HEK293 (cell line): ENCODE measurements at regions of chr2 and their contacts with region 1.

Region 1: DNA sequence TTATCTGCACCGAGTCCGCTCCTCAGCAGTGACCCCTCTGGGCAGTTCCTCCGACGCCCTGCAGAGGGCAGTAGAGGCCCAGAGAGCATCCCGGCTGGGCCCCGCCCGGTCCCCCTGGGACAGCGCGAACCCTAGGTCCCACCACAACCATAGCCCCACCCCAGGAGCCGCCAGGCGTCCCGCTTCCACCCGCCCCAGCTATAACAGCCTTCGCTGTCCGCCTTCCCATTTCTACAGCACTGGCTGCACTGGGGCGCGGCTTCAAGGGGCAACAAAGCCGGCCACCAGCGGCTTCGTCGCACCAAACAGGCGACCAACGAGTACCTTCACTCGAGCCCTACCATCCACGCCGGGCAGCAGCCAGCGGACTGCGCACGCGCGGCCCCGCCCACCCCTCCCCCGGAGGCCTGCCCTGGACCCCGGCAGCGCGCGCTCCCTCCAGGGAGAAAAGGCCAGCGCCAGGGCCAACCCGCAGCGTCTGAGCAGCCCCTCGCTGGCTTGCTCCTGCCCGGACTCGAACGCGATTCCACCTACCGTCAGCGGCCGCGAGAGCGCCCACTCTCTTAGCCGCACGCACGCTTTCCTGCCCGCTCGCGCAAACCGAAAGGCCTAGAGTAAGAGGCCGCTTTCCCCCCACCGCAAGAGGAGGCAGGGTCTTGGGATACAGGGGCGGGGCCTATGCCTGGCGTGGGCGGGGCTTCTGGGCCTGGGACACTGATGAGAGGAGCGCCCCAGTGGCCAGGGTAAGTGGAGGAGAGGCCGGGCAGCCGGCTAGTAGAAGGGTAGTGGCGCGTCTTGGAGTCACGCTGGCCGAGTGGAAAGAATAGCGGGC is at the start of gene NHEJ1:
- H3K4me3 ChIP-seq: peak within 1 kb of the TSS; percentile 83
- H3K27ac ChIP-seq: peak within 1 kb of the TSS; percentile 97
- H3K4me1 ChIP-seq: peaks cover 5% of the 10 kb centered on the region; the same call in 1 of the 2 replicates
- CTCF ChIP-seq: peak; percentile 96

Region 2: DNA sequence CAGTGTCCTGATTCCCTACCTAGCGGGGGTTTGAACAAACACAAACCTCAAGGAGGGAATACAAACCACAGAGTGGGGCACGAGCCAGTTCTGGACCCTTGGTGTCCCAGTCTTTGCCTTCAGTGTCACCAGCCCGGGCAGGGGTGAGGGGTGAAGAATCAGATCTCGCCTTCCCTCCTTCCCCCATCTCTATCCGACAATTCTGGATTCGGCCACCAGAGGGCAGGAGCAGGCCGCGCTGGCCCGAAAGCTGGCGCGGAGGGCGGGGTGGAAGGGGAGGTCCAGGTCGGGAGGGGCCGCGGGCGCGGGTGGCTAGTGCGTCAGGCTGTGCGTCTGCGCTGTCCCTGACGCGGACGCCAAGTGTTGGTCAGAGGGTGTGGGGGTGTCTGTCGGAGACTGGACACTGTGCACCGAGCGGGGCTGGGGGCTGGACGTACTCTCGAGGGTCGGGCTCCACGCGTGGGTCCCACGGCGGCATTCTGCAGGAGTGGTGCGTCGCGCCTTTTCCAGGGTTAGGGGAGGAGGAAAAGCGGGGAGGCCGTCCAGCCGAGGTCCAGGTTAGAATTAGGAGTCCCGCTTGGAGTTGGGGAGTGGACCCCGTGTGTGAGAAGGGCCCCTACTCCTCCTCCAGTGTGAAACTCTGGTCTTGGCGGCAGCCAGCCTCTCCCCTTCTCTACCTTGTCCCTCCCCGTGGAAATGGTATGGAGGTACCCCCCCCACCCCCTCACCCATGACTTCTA is 164.3 kb before region 1 on chr2:
- CTCF ChIA-PET with region 1: interaction called, 31 read pairs
- POLR2A ChIA-PET with region 1: no interaction called
- H3K4me3 ChIP-seq: peak overlapping the region; percentile 27
- H3K27ac ChIP-seq: no peak overlapping the region
- H3K4me1 ChIP-seq: no peaks in the 10 kb centered on the region
- CTCF ChIP-seq: peak; percentile 94

Region 3: DNA sequence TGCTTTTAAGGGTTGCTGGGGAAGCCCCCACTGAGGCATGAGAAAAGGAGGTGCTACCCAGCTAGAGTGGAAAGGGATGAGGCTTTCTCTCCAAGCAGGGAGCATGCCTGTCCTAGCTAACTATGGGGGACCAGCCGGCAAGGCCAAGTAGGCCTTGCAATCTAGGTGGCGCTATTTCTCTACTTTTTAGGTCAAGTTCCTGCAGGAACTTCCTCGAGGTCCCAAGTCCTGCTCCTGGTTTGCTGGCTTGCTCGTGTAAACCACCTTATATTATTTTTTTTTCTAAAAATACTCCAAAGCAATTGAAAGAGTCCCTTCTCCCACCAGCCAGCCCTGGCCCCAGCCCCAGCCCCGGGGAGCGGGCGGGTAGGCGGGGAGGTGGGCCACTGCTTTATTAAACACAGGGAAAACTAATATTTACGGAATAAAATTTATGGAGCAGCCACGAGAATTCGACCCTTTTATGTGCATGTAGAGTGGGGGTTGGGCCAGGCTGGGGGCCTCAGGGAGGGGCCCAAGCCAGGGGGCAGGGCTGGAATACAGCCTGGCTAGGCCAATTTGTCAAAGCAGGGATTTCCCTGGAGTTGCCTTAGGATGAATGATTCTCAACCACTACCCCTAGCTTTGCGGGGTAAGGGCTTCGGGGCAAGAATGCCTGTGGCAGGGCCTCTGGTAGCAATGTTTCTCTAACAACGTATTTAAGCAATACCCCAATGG is 86.8 kb before region 1 on chr2:
- CTCF ChIA-PET with region 1: interaction called, 58 read pairs
- POLR2A ChIA-PET with region 1: no interaction called
- H3K4me3 ChIP-seq: no peak overlapping the region
- H3K27ac ChIP-seq: no peak overlapping the region
- H3K4me1 ChIP-seq: no peaks in the 10 kb centered on the region
- CTCF ChIP-seq: no peak

Region 4: GRCh38 chr2:219177552-219178376 is 17.4 kb after region 1 on chr2 and contains the start of gene RETREG2:
- CTCF ChIA-PET with region 1: interaction called, 32 read pairs
- POLR2A ChIA-PET with region 1: interaction called, 5 read pairs
- H3K4me3 ChIP-seq: peak within 1 kb of the TSS; percentile 78
- H3K27ac ChIP-seq: peak within 1 kb of the TSS; percentile 79
- H3K4me1 ChIP-seq: peaks cover 6% of the 10 kb centered on the region; the same call in 1 of the 2 replicates
- CTCF ChIP-seq: peak; percentile 20; the same call in 1 of the 2 replicates

Region 5: DNA sequence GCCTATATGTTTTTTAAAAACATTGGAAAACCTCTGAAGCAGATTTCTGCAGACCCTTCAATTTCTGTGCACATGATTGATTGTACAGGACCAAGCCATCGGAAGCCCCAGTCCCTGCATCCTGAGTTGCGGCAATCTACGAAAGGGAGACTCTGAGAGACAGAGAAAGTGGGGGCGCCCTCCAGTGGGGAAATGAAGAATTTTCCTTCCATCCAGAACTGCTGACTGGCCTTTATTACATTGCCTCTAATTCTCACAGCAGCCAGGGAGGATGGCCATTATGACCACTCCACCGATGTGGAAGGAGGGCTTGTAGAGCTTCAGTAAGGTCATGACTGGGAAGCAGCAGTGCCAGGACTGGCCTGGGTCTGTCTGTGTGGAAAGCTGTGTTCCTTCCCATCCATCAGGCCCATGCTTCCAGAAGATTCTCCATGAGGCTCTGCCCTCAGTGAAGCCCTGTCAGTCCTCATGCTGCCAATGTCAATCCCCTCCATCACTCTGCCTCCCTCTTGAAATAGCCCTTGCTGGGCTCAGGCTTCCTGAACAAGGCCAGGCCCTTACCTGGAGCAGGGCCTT is 192.1 kb after region 1 on chr2:
- CTCF ChIA-PET with region 1: interaction called, 12 read pairs
- POLR2A ChIA-PET with region 1: no interaction called
- H3K4me3 ChIP-seq: no peak overlapping the region
- H3K27ac ChIP-seq: no peak overlapping the region
- H3K4me1 ChIP-seq: no peaks in the 10 kb centered on the region
- CTCF ChIP-seq: peak; percentile 50; the same call in 1 of the 2 replicates